Activated CD8-positive, alpha-beta T cell treated with anti-CD3 and anti-CD28 coated beads for 36 hours (primary cell): ENCODE measurements at regions of chr2 and their contacts with region 1.

Region 1: GRCh38 chr2:74587664-74588277 is 33.3 kb downstream of the DOK1 start:
- DNase-seq: peak; percentile 79
- ATAC-seq: peak; percentile 77
- H3K4me3 Mint-ChIP-seq: no peak overlapping the region
- H3K27ac Mint-ChIP-seq: no peak overlapping the region
- H3K4me1 Mint-ChIP-seq: peaks cover 23% of the 10 kb centered on the region
- H3K27me3 Mint-ChIP-seq: peaks cover 9% of the 10 kb centered on the region
- CTCF ChIP-seq: peak; percentile 71

Region 2: GRCh38 chr2:74472086-74472944 is 115.5 kb before region 1 on chr2 and contains the start of gene MRPL53:
- CTCF ChIA-PET with region 1: interaction called, 20 read pairs
- POLR2A ChIA-PET with region 1: interaction called, 4 read pairs
- intact Hi-C with region 1: no loop called
- DNase-seq: peak; percentile 96
- ATAC-seq: peak; percentile 92
- H3K4me3 Mint-ChIP-seq: peak within 1 kb of the TSS; percentile 95
- H3K27ac Mint-ChIP-seq: peak within 1 kb of the TSS; percentile 93
- H3K4me1 Mint-ChIP-seq: peaks cover 16% of the 10 kb centered on the region
- H3K27me3 Mint-ChIP-seq: no peaks in the 10 kb centered on the region
- CTCF ChIP-seq: no peak
- total RNA-seq, gene MRPL53: 111 to 113 TPM

Region 3: GRCh38 chr2:74507145-74507925 is 80.4 kb before region 1 on chr2 and contains the start of gene PCGF1:
- CTCF ChIA-PET with region 1: interaction called, 27 read pairs
- POLR2A ChIA-PET with region 1: interaction called, 4 read pairs
- intact Hi-C with region 1: no loop called
- DNase-seq: peak; percentile 100
- ATAC-seq: peak; percentile 91
- H3K4me3 Mint-ChIP-seq: peak within 1 kb of the TSS; percentile 94
- H3K27ac Mint-ChIP-seq: peak within 1 kb of the TSS; percentile 99
- H3K4me1 Mint-ChIP-seq: peaks cover 42% of the 10 kb centered on the region
- H3K27me3 Mint-ChIP-seq: peaks cover 44% of the 10 kb centered on the region
- CTCF ChIP-seq: peak; percentile 50
- total RNA-seq, gene PCGF1: 16.1 to 21.1 TPM

Region 4: GRCh38 chr2:74544634-74545033 is 43.1 kb before region 1 on chr2:
- CTCF ChIA-PET with region 1: interaction called, 21 read pairs
- POLR2A ChIA-PET with region 1: interaction called, 4 read pairs
- intact Hi-C with region 1: no loop called
- DNase-seq: peak; percentile 47
- ATAC-seq: no peak
- H3K4me3 Mint-ChIP-seq: no peak overlapping the region
- H3K27ac Mint-ChIP-seq: no peak overlapping the region
- H3K4me1 Mint-ChIP-seq: no peaks in the 10 kb centered on the region
- H3K27me3 Mint-ChIP-seq: peaks cover 39% of the 10 kb centered on the region
- CTCF ChIP-seq: peak; percentile 44

Region 5: GRCh38 chr2:74566754-74567085 is 21.1 kb before region 1 on chr2:
- CTCF ChIA-PET with region 1: interaction called, 15 read pairs
- POLR2A ChIA-PET with region 1: interaction called, 3 read pairs
- intact Hi-C with region 1: no loop called
- DNase-seq: no peak
- ATAC-seq: peak; percentile 64
- H3K4me3 Mint-ChIP-seq: peak overlapping the region; percentile 22
- H3K27ac Mint-ChIP-seq: peak overlapping the region; percentile 82
- H3K4me1 Mint-ChIP-seq: peaks cover 30% of the 10 kb centered on the region
- H3K27me3 Mint-ChIP-seq: peaks cover 16% of the 10 kb centered on the region
- CTCF ChIP-seq: no peak

Region 6: DNA sequence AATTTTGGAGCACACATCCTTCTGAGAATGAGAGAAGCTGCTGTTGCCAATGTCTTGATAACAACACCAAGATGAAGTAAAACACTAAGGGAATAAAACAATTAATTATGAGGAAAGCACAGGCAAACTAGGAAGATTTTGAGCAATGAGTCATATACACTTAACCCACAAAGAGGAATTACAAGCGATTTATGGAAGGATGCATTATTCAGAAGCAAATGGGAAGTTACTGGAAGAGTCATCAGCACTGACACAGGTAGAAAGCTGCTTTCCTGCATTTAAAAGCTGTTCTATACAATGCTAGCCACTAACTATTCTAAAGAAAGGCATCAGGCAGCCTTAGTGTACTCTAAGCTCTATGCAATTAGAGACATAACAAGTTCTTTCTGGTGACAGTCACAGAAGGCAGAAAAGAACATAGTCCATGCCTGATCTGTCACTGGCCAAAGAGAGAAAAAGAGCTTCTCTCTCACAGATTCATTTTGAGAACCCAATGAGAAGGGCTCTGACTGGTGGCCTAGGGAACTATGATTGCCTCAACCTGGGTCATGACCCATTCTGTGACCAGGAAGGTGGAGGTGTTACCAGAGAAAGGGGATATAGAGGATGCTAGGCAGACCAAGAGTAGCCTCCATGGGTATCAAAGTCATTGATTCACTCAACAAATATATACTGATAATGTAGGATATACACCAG is 15.0 kb after region 1 on chr2:
- CTCF ChIA-PET with region 1: interaction called, 44 read pairs
- POLR2A ChIA-PET with region 1: no interaction called
- intact Hi-C with region 1: no loop called
- DNase-seq: no peak
- ATAC-seq: peak; percentile 55
- H3K4me3 Mint-ChIP-seq: no peak overlapping the region
- H3K27ac Mint-ChIP-seq: no peak overlapping the region
- H3K4me1 Mint-ChIP-seq: peaks cover 6% of the 10 kb centered on the region
- H3K27me3 Mint-ChIP-seq: peaks cover 23% of the 10 kb centered on the region
- CTCF ChIP-seq: no peak

Region 7: GRCh38 chr2:74690571-74690970 is 102.8 kb after region 1 on chr2:
- CTCF ChIA-PET with region 1: no interaction called
- POLR2A ChIA-PET with region 1: no interaction called
- intact Hi-C with region 1: no loop called
- DNase-seq: peak; percentile 33
- ATAC-seq: peak; percentile 74
- H3K4me3 Mint-ChIP-seq: no peak overlapping the region
- H3K27ac Mint-ChIP-seq: no peak overlapping the region
- H3K4me1 Mint-ChIP-seq: no peaks in the 10 kb centered on the region
- H3K27me3 Mint-ChIP-seq: no peaks in the 10 kb centered on the region
- CTCF ChIP-seq: peak; percentile 67

Region 8: GRCh38 chr2:74849228-74849892 is 261.6 kb after region 1 on chr2:
- CTCF ChIA-PET with region 1: no interaction called
- POLR2A ChIA-PET with region 1: no interaction called
- intact Hi-C with region 1: no loop called
- DNase-seq: peak; percentile 50
- ATAC-seq: peak; percentile 82
- H3K4me3 Mint-ChIP-seq: peak overlapping the region; percentile 48
- H3K27ac Mint-ChIP-seq: peak overlapping the region; percentile 79
- H3K4me1 Mint-ChIP-seq: peaks cover 66% of the 10 kb centered on the region
- H3K27me3 Mint-ChIP-seq: no peaks in the 10 kb centered on the region
- CTCF ChIP-seq: no peak